ENCODE measurements at regions of chr11 and their contacts with region 1.

Region 1: DNA sequence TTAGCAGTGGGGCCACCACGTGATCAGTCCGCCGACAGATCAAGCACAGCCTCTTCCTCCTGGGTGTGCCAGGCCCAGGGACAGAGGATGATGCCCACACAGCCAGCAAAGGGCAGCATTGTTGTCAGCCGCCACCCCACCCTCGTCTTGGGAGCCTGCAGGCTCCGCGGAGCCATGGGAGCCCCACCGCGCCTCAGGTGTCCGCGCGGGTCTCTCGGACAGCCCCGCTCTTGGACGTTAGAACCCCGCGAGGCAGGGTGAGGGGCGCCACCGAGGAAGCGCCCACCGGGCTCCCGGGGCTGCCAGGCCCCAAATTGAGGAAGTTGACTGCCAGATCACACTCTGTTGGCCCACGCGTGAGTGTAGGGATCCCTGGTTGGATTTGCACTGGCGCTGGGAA is 83.9 kb upstream of the MS4A8 start:
- DNase-seq: no peak
- H3K4me3 ChIP-seq: no peak overlapping the region
- H3K27ac ChIP-seq: no peak overlapping the region
- H3K27me3 ChIP-seq: peaks cover 0 to 7% (median 0%) of the 10 kb centered on the region in 45 donors
- CTCF ChIP-seq: no peak

Region 2: GRCh38 chr11:59560702-59561469 is 1054.6 kb before region 1 on chr11:
- intact Hi-C with region 1: no loop called
- DNase-seq: peak; percentile 68 to 86 (median 75)
- H3K4me3 ChIP-seq: peak overlapping the region; percentile 52 to 98 (median 85)
- H3K27ac ChIP-seq: peak overlapping the region; percentile 67 to 97 (median 93)
- H3K27me3 ChIP-seq: no peaks in the 10 kb centered on the region
- CTCF ChIP-seq: peak in 4 of 56 donors; percentile 6 to 22 (median 10)

Region 3: DNA sequence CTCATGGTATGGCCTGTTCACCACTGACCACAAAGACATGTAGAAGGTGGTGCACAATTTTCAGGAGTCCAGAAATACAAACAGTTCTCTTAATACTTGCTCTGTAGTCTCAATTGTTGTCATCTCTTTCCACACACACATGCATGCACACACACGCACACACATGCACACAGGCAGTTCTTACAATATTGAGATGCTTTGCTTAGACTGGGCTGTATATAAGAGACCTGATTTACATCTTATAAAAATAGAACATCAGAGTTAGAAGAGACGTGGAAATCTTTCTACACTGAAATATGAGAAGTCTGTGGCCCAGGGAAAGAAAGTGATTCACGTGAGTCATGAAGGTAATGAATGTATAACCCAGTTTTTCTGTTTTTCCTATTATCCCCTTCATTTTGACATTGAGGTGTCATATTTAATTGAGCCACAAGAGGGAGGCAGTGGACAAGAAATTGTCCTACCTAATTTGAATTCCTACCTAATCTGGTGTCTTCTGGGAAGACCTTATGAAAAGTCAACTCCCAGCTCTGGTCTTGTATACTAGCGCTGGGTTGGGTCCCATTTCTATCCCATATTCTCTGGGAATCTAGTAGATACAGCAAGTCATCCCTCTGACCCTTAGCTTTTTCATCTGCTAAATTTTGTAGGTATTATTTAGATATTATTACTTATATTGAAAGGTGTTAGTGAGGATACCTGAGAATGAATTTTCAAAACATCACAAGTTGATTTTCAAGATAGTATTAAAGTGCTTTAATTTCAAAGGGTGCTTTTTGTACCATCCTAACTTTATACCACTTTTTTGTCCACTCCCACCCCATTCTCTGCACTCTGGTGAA is 349.9 kb before region 1 on chr11:
- intact Hi-C with region 1: loop called in 1 of 2 experiments (anchors 10 kb)
- DNase-seq: no peak
- H3K4me3 ChIP-seq: no peak overlapping the region
- H3K27ac ChIP-seq: no peak overlapping the region
- H3K27me3 ChIP-seq: peaks cover 0 to 10% (median 0%) of the 10 kb centered on the region in 45 donors
- CTCF ChIP-seq: peak; percentile 62 to 93 (median 74)

Region 4: GRCh38 chr11:60363542-60364510 is 251.7 kb before region 1 on chr11:
- intact Hi-C with region 1: loop called (anchors 5 to 10 kb)
- DNase-seq: peak in 5 of 10 donors; percentile 21 to 63 (median 52)
- H3K4me3 ChIP-seq: peak overlapping the region in 5 of 59 donors; percentile 1 to 24 (median 15)
- H3K27ac ChIP-seq: peak overlapping the region in 10 of 59 donors; percentile 2 to 66 (median 35)
- H3K27me3 ChIP-seq: peaks cover 0 to 10% (median 0%) of the 10 kb centered on the region in 45 donors
- CTCF ChIP-seq: peak; percentile 57 to 86 (median 76)

Region 5: GRCh38 chr11:60786811-60787567 is 171.5 kb after region 1 on chr11:
- intact Hi-C with region 1: no loop called
- DNase-seq: no peak
- H3K4me3 ChIP-seq: no peak overlapping the region
- H3K27ac ChIP-seq: peak overlapping the region in 9 of 59 donors; percentile 3 to 63 (median 43)
- H3K27me3 ChIP-seq: no peaks in the 10 kb centered on the region
- CTCF ChIP-seq: no peak

Measured in dorsolateral prefrontal cortex (tissue), 120 donors.